Mucosa of descending colon (tissue), 3 donors: ENCODE measurements at regions of chr1 and their contacts with region 1.

Region 1: DNA sequence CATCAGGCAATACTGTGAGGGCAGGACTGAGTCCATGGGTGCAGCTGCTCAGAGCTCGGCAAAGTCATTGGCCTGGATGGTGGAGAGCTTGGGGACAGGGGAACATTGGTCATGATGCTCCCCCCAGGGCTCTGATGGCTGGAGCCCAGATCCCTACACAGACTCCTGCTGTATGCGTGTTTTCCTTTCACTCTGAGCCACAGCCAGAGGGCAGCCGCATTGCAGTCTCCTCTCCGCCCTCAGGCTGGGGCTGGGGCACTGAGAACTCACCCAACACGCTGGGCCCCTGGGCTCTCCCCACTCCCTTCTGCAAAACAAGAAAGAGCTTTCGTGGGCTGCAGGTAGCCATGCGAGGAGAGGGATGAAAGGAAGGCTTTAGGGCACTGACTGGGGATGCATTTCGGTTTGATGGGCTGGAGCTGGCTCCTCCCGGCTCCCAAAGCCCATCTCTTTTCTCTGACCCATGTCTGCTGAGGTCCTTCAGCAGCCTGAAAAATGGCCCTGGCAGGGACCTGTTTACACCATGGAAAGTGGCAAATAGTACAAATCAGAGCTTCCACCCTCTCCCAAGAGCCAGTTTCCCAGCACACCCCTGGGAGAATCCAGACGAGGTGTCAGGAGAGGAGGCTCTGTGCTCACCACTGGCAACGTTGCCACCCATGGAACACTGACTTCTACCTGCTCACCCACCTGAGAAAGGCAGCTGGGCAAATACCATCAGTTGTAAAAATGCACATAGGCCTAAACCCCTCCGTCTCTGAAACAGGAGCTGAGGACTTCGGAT is 43.8 kb downstream of the CAPN2 start:
- DNase-seq: peak in 1 of 3 donors; percentile 16
- ATAC-seq: no peak
- H3K4me3 ChIP-seq: no peak overlapping the region
- H3K4me1 ChIP-seq: no peaks in the 10 kb centered on the region
- CTCF ChIP-seq: no peak

Region 2: DNA sequence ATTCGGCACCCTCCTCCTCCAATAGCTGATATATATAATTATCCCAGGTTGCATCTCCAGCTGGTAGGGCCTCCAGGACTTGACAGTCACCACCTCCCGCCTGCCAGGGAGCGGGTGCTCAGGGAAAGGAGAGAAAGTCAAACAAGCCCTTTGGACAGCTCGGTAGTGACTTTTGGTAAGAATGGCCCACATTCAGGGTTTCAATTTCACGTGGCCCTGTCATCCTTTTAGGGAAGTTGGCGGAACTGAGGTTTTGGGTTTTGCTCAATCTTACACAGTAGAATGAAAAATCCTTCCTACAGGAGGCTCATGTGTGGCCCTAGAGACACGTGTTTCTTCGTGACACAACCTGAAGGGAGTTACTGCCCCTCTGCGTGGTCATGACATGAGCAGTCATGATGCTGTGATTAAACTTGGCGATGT is 134.9 kb before region 1 on chr1:
- intact Hi-C with region 1: no loop called
- DNase-seq: peak in 1 of 3 donors; percentile 34
- ATAC-seq: peak; percentile 9
- H3K4me3 ChIP-seq: no peak overlapping the region
- H3K4me1 ChIP-seq: no peaks in the 10 kb centered on the region
- CTCF ChIP-seq: no peak

Region 3: GRCh38 chr1:223707256-223708000 is 48.8 kb before region 1 on chr1:
- intact Hi-C with region 1: loop called in 1 of 2 experiments (anchors 10 kb)
- DNase-seq: peak; percentile 71 to 76 (median 74)
- ATAC-seq: peak; percentile 82
- H3K4me3 ChIP-seq: no peak overlapping the region
- H3K4me1 ChIP-seq: peaks cover 27% of the 10 kb centered on the region
- CTCF ChIP-seq: no peak